ENCODE measurements at regions of chr4 and their contacts with region 1.

Region 1: GRCh38 chr4:76420762-76421581 is at the start of gene CCDC158:
- DNase-seq: peak; percentile 28 to 54
- ATAC-seq: peak; percentile 75 to 88 (median 86)
- H3K4me3 ChIP-seq: peak within 1 kb of the TSS; percentile 75
- H3K27ac ChIP-seq: no peak within 1 kb of the TSS
- H3K4me1 ChIP-seq: peaks cover under 1% of the 10 kb centered on the region
- H3K27me3 ChIP-seq: peaks cover 0 to 11% (median 0%) of the 10 kb centered on the region in 3 donors
- CTCF ChIP-seq: no peak
- total RNA-seq, gene CCDC158: 0.17 to 0.32 (median 0.17) TPM in 3 of 4 donors, not detected in the other

Region 2: DNA sequence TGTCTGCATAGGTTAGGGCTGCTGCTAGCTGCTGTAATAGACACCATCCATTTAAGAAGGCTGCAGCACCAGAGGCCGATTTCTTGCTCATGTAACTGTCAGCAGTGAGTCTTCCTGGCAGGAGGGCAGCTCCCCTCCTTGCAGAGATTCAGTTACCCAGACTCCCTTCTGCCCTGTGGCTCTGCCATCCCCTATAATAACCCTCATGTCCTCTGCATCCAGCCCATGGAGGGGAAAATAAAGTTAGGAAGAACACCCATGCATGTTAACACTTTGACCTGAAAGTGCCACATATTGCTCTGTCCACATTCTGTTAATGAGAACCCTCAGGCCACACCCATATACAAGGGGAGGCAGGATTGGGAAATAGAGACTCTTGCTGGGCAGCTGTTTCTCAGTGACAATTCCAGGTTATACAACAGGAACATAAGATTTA is 109.1 kb before region 1 on chr4:
- intact Hi-C with region 1: loop called in 1 of 2 experiments (anchors 10 kb)
- DNase-seq: peak in 1 of 2 donors; percentile 70
- ATAC-seq: peak; percentile 60 to 79 (median 73)
- H3K4me3 ChIP-seq: peak overlapping the region; percentile 97
- H3K27ac ChIP-seq: peak overlapping the region; percentile 73
- H3K4me1 ChIP-seq: peaks cover 47% of the 10 kb centered on the region
- H3K27me3 ChIP-seq: no peaks in the 10 kb centered on the region
- CTCF ChIP-seq: no peak

Region 3: DNA sequence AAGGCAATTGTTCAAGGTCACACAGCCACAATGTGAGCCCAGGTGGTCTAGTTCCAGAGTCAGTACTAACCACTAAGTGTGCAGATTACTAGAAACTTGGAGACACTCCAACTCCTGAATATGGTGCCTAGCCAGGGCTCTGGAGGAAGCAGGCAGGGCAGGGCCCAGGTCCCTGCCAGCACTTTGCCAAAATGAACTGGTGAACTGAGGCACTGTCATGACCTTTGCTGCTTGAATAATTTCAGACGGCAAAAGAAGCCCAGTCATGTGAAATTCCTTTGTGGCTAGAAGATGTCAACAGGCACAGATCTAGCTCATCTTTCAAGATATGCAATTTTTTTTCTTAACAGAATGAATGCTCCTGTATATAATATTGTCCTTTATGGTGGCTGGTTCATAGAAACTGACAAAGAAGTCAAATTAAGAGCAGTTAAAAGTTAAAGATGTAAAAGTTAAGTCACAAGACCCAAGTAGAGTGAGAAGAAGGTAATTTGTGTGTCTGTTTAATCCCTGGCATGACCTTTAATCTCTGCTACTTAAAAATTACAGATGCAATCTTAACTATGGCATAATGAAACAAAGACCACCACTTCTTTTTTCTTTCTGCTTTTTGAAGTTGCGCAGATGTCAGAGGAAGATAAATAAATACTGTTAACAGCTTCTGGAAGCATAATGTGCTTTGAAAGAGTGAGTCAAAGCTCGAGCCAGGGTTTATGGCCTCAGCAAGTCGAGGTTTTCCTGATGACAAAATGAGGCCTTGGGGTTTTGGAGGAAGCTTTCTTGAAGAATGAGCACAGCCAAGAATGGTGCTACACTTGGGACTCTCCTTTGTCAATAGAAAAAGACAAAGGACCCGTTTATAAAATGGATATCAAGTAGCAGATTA is 68.2 kb after region 1 on chr4:
- intact Hi-C with region 1: no loop called
- DNase-seq: no peak
- ATAC-seq: no peak
- H3K4me3 ChIP-seq: no peak overlapping the region
- H3K27ac ChIP-seq: no peak overlapping the region
- H3K4me1 ChIP-seq: no peaks in the 10 kb centered on the region
- H3K27me3 ChIP-seq: no peaks in the 10 kb centered on the region
- CTCF ChIP-seq: no peak

Region 4: GRCh38 chr4:76920715-76921114 is 499.7 kb after region 1 on chr4:
- intact Hi-C with region 1: no loop called
- DNase-seq: no peak
- ATAC-seq: no peak
- H3K4me3 ChIP-seq: no peak overlapping the region
- H3K27ac ChIP-seq: no peak overlapping the region
- H3K4me1 ChIP-seq: no peaks in the 10 kb centered on the region
- H3K27me3 ChIP-seq: no peaks in the 10 kb centered on the region
- CTCF ChIP-seq: no peak